Activated naive CD4-positive, alpha-beta T cell treated with anti-CD3 and anti-CD28 coated beads, Interleukin-2, amount 10 ng/mL, durations not matched to agents 7 days and 5 days (primary cell): ENCODE measurements at regions of chr1 and their contacts with region 1.

Region 1: DNA sequence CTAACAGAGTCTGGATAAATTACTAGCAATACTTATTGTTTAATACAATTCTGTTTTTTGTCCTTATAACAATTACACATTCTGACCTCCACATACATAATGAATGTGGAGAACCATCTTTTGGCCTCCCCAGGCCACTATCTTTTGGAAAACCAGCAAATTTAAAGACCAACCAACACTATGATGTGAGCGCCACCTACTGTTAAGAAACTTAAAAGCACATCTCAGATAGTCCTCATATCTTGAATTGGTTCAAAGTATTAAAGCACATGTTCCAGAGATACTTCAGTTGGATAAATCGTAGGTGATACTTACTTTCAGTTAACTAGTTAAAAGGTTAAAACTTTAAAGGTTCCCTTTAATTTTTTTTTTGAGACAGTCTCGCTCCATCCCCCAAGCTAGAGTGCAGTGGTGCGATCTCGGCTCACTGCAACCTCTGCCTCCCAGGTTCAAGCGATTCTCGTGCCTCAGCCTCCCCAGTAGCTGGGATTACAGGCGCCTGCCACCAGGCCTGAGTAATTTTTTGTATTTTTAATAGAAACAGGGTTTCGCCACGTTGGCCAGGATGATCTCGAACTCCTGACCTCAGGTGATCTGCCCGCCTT is 29.3 kb upstream of the USP1 start:
- DNase-seq: no peak
- H3K4me3 Mint-ChIP-seq: no peak overlapping the region
- H3K27ac Mint-ChIP-seq: no peak overlapping the region
- H3K4me1 Mint-ChIP-seq: no peaks in the 10 kb centered on the region
- H3K27me3 Mint-ChIP-seq: no peaks in the 10 kb centered on the region

Region 2: GRCh38 chr1:62175568-62176179 is 231.8 kb before region 1 on chr1:
- CTCF ChIA-PET with region 1: interaction called, 85 read pairs
- DNase-seq: peak; percentile 60
- H3K4me3 Mint-ChIP-seq: no peak overlapping the region
- H3K27ac Mint-ChIP-seq: no peak overlapping the region
- H3K4me1 Mint-ChIP-seq: no peaks in the 10 kb centered on the region
- H3K27me3 Mint-ChIP-seq: peaks cover 4% of the 10 kb centered on the region

Region 3: DNA sequence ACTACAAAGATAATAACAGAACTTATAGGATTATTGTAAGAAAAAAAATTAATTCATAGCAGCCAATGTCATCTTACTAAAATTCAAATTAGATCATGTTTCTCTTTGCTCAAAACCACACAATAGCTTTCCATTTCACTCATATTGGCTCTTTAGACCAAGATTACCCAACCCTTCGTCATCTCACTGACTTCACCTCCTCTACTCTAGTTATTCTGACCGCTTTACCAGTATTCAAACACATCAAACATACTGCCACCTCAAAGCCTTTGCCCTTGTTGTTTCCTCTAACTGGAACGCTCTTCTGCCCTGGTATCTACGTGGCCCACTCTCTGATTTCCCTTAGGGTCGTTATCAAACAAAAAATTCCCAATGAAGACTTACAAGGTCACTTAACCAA is 191.5 kb after region 1 on chr1:
- CTCF ChIA-PET with region 1: no interaction called
- DNase-seq: no peak
- H3K4me3 Mint-ChIP-seq: no peak overlapping the region
- H3K27ac Mint-ChIP-seq: no peak overlapping the region
- H3K4me1 Mint-ChIP-seq: no peaks in the 10 kb centered on the region
- H3K27me3 Mint-ChIP-seq: no peaks in the 10 kb centered on the region